ENCODE measurements at regions of chr3 and their contacts with region 1.

Region 1: DNA sequence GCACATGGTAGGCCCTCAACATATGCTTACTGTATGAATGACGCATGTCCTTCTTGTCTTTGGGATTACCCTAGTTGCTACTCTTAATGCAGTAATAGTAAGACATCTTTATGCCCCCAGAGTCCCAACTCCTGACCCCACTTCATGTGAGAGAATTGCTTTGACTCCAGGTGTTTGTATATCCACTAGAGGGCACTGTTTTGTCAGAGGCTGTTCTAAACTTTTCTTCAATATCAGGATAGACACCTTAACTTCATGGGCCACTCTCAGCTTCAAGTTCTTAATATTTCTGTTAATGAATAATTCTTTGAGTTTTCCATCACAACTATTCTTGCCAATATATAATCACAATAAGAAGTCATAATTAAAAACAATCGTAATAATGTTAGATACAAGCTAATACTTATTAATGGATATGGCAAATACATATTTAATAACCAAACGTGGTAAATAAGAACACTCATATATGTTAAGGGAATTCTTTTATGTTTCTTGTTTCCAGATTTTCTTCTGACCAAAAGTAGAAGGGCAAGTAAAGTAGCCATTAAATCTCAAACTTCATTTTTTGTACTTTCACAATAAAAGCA is 337.2 kb upstream of the DNAJC19 start:
- DNase-seq: no peak
- ATAC-seq: no peak

Region 2: GRCh38 chr3:181230258-181230657 is 96.5 kb before region 1 on chr3:
- intact Hi-C with region 1: no loop called
- DNase-seq: no peak
- ATAC-seq: no peak

Region 3: DNA sequence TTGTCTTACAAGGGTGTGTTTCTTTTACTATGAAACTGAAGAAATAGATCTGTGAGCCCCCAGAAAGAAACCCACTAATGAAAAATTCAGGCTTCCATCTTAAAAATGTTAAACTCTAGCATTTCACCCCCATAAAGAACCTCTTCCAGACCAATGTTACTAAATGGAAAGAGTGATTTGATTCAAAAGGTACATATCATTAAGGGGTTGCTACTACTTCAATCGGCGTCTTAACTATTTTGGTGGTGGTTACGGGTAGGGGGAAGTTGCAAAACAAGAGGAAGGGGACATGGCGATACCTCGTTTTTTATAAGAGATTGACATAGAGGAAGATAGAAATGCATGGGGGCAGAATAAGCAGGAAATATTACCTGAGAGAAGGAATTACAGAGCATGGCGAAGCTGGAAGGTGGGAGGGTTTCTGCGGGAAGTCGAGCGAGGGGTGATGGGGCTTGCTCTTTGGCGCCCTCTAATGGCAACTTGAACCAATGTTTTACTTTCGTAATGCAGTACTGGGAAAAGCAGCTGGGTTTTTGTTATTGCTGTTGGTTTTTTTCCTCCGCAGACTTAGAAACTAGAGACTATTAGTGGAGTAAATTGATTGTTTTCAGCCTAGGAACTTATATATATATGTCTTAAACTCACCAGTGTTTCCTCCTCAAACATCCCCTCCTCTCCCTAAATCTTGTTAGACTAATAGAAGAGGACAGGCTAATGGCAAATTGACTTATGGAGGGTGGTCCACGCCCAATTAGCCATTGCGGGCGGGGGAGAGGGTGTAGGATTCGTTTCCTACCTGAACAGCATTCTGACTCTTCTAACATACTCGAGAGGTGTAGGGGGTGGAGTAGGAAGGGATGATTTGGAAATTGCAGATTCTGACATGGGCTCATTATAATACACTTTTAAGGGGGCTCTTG is 373.7 kb after region 1 on chr3:
- intact Hi-C with region 1: loop called (anchors 2 to 5 kb)
- DNase-seq: peak; percentile 48
- ATAC-seq: peak; percentile 75 to 81

Region 4: GRCh38 chr3:182063742-182064141 is 737.0 kb after region 1 on chr3:
- intact Hi-C with region 1: no loop called
- DNase-seq: no peak
- ATAC-seq: no peak